ENCODE measurements at regions of chr3 and their contacts with region 1.

Region 1: GRCh38 chr3:14651440-14652251 is at the start of gene CCDC174:
- DNase-seq: peak; percentile 84 to 98 (median 96)
- ATAC-seq: peak; percentile 99
- H3K4me3 ChIP-seq: peak within 1 kb of the TSS; percentile 90
- H3K4me3 Mint-ChIP-seq: peak within 1 kb of the TSS; percentile 84 to 100 (median 96)
- H3K27ac ChIP-seq: peak within 1 kb of the TSS; percentile 94
- H3K27ac Mint-ChIP-seq: peak within 1 kb of the TSS; percentile 92 to 100 (median 98)
- H3K4me1 ChIP-seq: peaks cover 21 to 25% of the 10 kb centered on the region in 2 donors
- H3K4me1 Mint-ChIP-seq: peaks cover 25 to 80% (median 66%) of the 10 kb centered on the region in 7 donors
- H3K27me3 ChIP-seq: no peaks in the 10 kb centered on the region
- H3K27me3 Mint-ChIP-seq: peaks cover 0 to 2% (median 0%) of the 10 kb centered on the region in 5 donors
- total RNA-seq, gene CCDC174: 21.6 to 59.2 (median 46.2) TPM

Region 2: GRCh38 chr3:12967606-12968351 is 1683.9 kb before region 1 on chr3:
- CTCF ChIA-PET with region 1: no interaction called
- POLR2A ChIA-PET with region 1: no interaction called
- intact Hi-C with region 1: loop called in 1 of 2 experiments (anchors 5 kb)
- DNase-seq: peak; percentile 71 to 87 (median 83)
- ATAC-seq: peak; percentile 99
- H3K4me3 ChIP-seq: peak overlapping the region; percentile 47
- H3K4me3 Mint-ChIP-seq: peak overlapping the region; percentile 74 to 87 (median 86)
- H3K27ac ChIP-seq: peak overlapping the region; percentile 29
- H3K27ac Mint-ChIP-seq: peak overlapping the region in 4 of 9 donors; percentile 9 to 84 (median 60)
- H3K4me1 ChIP-seq: peaks cover 47 to 53% of the 10 kb centered on the region in 2 donors
- H3K4me1 Mint-ChIP-seq: peaks cover 50 to 86% (median 77%) of the 10 kb centered on the region in 7 donors
- H3K27me3 ChIP-seq: no peaks in the 10 kb centered on the region
- H3K27me3 Mint-ChIP-seq: peaks cover 0 to 5% (median 0%) of the 10 kb centered on the region in 5 donors

Region 3: GRCh38 chr3:15098503-15099363 is 447.1 kb after region 1 on chr3 and contains the start of gene RBSN:
- CTCF ChIA-PET with region 1: no interaction called
- POLR2A ChIA-PET with region 1: interaction called, 23 read pairs
- intact Hi-C with region 1: loop called in 1 of 2 experiments (anchors 1 kb)
- DNase-seq: peak; percentile 87 to 96 (median 94)
- ATAC-seq: peak; percentile 87
- H3K4me3 ChIP-seq: peak within 1 kb of the TSS; percentile 83
- H3K4me3 Mint-ChIP-seq: peak within 1 kb of the TSS; percentile 90 to 99 (median 96)
- H3K27ac ChIP-seq: peak within 1 kb of the TSS; percentile 96
- H3K27ac Mint-ChIP-seq: peak within 1 kb of the TSS; percentile 90 to 99 (median 98)
- H3K4me1 ChIP-seq: peaks cover 8 to 14% of the 10 kb centered on the region in 2 donors
- H3K4me1 Mint-ChIP-seq: peaks cover 21 to 42% (median 30%) of the 10 kb centered on the region in 7 donors
- H3K27me3 ChIP-seq: no peaks in the 10 kb centered on the region
- H3K27me3 Mint-ChIP-seq: peaks cover 0 to 9% (median 2%) of the 10 kb centered on the region in 5 donors
- total RNA-seq, gene RBSN: 20.5 to 54.4 (median 39.6) TPM